Naive thymus-derived CD4-positive, alpha-beta T cell (primary cell): ENCODE measurements at regions of chr15 and their contacts with region 1.

Region 1: DNA sequence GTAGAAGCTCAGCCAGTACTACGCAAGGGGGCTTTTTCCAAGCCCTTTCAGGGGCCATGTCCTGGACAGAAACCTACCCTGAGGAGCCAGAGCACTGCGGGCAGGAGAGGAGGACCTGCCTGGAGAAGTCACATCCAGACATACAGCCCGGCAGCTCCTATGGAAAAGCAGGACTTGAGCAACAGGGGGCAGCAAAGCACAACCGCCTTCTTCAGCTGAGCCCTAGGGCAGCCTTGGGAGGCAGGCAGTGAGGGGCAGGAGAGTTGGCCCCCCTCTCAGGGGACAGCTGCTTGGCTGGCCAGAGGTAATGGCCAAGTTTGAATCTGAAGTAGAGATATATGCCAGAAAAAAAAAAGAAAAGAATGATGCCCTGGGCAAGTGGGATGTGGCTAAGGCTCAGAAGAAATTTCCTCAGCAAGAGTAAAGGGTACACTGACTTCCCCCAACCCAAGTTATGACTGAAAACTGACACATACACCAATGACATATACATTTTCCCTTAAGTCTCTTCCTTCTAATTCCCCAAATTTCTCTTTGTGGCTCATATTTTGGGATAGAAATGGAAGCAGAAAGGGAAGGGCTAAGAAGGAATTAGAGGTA is 56.9 kb downstream of the CYP19A1 start:
- DNase-seq: no peak
- ATAC-seq: no peak
- H3K4me3 ChIP-seq: no peak overlapping the region
- H3K4me3 Mint-ChIP-seq: no peak overlapping the region
- H3K27ac ChIP-seq: no peak overlapping the region
- H3K27ac Mint-ChIP-seq: no peak overlapping the region
- H3K4me1 ChIP-seq: no peaks in the 10 kb centered on the region
- H3K4me1 Mint-ChIP-seq: peaks cover 0 to 12% (median 0%) of the 10 kb centered on the region in 7 donors
- H3K27me3 ChIP-seq: no peaks in the 10 kb centered on the region
- H3K27me3 Mint-ChIP-seq: peaks cover 12 to 34% (median 24%) of the 10 kb centered on the region in 5 donors

Region 2: DNA sequence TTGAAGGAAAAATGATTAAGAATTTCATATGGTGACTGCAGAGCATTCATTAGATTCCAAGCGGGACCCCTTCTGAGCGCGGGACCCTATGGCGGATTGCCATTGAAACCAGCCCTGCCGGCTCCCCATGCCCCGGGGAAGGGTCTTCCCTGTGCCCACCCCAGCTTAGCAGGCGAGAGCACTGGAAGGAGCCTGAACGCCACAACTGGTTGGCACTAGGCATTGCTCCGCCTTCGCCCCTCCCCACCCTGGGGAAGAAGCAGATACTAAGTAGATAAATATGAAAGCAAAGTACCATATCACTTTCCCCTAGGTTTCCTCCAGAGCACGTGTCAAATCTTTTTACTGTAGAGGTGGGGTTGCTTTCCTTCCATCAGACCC is 13.8 kb before region 1 on chr15:
- CTCF ChIA-PET with region 1: no interaction called
- POLR2A ChIA-PET with region 1: no interaction called
- intact Hi-C with region 1: no loop called
- DNase-seq: no peak
- ATAC-seq: no peak
- H3K4me3 ChIP-seq: no peak overlapping the region
- H3K4me3 Mint-ChIP-seq: no peak overlapping the region
- H3K27ac ChIP-seq: no peak overlapping the region
- H3K27ac Mint-ChIP-seq: no peak overlapping the region
- H3K4me1 ChIP-seq: no peaks in the 10 kb centered on the region
- H3K4me1 Mint-ChIP-seq: peaks cover 2 to 7% (median 5%) of the 10 kb centered on the region in 7 donors
- H3K27me3 ChIP-seq: peaks cover 0 to 5% of the 10 kb centered on the region in 2 donors
- H3K27me3 Mint-ChIP-seq: peaks cover 0 to 43% (median 21%) of the 10 kb centered on the region in 5 donors

Region 3: GRCh38 chr15:51380999-51381795 is 99.7 kb after region 1 on chr15:
- CTCF ChIA-PET with region 1: no interaction called
- POLR2A ChIA-PET with region 1: no interaction called
- intact Hi-C with region 1: loop called in 1 of 2 experiments (anchors 1 kb)
- DNase-seq: peak in 1 of 9 donors; percentile 25
- ATAC-seq: peak; percentile 84
- H3K4me3 ChIP-seq: no peak overlapping the region
- H3K4me3 Mint-ChIP-seq: no peak overlapping the region
- H3K27ac ChIP-seq: no peak overlapping the region
- H3K27ac Mint-ChIP-seq: no peak overlapping the region
- H3K4me1 ChIP-seq: no peaks in the 10 kb centered on the region
- H3K4me1 Mint-ChIP-seq: peaks cover 0 to 5% (median 0%) of the 10 kb centered on the region in 7 donors
- H3K27me3 ChIP-seq: no peaks in the 10 kb centered on the region
- H3K27me3 Mint-ChIP-seq: peaks cover 0 to 29% (median 16%) of the 10 kb centered on the region in 5 donors